PC-9 (cell line): ENCODE measurements at regions of chr19 and their contacts with region 1.

Region 1: DNA sequence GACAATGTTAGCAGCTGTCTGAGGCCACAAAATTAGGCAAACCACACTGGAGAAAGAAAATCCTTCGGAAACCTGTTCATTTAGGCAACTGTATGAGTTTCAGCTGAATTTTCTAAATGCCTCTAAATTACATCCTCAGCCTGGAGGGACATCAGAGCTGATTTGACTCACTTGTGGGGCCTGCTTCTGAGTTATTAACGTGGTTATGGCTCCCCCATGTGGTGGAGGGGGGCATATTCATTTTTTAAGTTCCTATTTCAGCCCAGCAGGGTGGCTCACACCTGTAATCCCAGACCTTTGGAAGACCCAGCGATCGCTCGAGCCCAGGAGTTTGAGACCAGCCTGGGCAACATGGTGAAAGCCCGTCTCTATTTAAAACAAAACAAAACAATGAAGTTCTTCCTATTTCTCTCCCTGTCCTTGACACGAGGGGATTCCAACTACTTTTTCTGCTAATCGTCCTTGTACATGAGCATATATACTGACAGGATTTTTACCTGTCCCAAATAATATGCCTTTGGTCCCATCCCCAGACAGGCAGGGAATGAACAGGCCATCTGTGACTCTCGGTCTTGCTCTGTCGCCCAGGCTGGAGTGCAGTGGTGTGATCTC is 31.5 kb upstream of the HIF3A start:
- DNase-seq: peak; percentile 77 to 82
- H3K4me3 ChIP-seq: no peak overlapping the region
- H3K27ac ChIP-seq: no peak overlapping the region
- H3K4me1 ChIP-seq: peaks cover 40% of the 10 kb centered on the region
- H3K27me3 ChIP-seq: no peaks in the 10 kb centered on the region
- CTCF ChIP-seq: peak; percentile 96

Region 2: DNA sequence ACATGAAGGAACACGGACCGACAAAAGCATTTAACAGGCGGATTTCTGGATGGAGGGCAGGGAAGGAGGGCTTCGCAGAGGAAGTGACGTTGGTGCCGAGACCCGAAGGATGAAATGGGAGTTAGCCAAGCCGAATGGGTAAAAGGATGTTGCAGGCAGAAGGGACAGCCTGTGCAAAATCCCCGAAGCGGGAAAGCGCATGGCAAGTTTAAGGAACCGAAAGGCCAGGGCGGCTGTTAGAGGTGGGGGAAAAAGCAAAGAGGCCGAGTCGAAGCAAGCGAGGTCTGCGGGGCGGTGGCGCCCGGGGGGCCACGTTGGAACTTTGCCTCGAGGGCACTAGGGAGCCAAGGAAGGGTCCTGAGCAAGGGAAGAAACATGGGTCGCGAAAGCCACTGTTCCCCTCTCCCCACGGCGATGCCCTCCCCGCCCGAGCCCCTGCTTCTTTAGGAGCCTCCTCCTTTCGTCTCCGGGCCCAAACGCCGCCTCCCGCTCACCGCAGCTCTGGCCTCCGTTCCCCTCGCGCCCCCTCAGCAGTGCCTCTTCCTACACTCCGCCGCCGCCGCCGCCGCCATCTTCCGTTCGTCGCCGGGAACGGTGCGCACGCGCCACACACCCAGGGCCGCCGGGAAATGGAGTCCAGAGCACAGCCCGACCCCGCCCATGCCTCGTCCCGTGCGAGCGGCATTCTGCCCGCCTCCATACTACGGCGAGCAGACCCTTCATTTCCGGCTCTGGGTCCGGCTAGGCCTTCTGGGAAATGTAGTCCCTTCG is 402.6 kb before region 1 on chr19 and contains the start of gene SYMPK:
- CTCF ChIA-PET with region 1: no interaction called
- POLR2A ChIA-PET with region 1: interaction called, 3 read pairs
- intact Hi-C with region 1: loop called (anchors 10 kb)
- DNase-seq: peak; percentile 97
- H3K4me3 ChIP-seq: peak within 1 kb of the TSS; percentile 67
- H3K27ac ChIP-seq: peak within 1 kb of the TSS; percentile 30
- H3K4me1 ChIP-seq: peaks cover 15% of the 10 kb centered on the region
- H3K27me3 ChIP-seq: peaks cover 41% of the 10 kb centered on the region
- CTCF ChIP-seq: no peak; the same call in 1 of the 2 replicates
- total RNA-seq, gene SYMPK: 85.5 and 121 TPM in 2 replicates

Region 3: GRCh38 chr19:46076951-46077816 is 188.1 kb before region 1 on chr19:
- CTCF ChIA-PET with region 1: interaction called, 28 read pairs
- POLR2A ChIA-PET with region 1: no interaction called
- intact Hi-C with region 1: loop called (anchors 1 kb)
- DNase-seq: peak; percentile 73 to 74
- H3K4me3 ChIP-seq: peak overlapping the region; percentile 55
- H3K27ac ChIP-seq: no peak overlapping the region
- H3K4me1 ChIP-seq: peaks cover 38% of the 10 kb centered on the region
- H3K27me3 ChIP-seq: no peaks in the 10 kb centered on the region
- CTCF ChIP-seq: peak; percentile 99

Region 4: DNA sequence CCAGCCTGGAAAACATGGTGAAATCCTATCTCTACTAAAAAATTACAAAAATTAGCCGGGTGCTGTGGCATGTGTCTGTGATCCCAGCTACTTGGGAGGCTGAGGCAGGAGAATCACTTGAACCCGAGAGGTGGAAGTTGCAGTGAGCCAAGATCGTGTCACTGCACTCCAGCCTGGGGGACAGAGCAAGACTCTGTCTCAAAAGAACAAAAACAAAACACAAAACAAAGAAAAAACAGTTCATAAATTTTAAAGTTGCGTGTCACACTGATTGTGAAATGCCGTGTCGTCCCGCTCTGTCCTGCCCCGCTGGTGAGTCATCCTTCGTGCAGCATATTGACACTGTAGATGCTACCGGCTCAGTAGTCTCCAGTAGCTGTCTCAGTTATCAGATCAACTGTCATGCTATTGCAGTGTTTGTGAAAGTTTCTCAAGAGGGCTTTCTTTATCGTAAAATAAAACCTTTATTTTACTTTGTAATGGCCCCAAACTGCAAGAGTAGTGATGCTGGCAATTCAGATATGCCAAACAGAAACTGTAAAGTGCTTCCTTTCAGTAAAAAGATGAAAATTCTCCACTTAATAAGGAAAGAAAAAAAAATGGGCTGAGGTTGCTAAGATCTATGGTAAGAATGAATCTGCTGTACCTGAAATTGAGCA is 72.2 kb before region 1 on chr19:
- CTCF ChIA-PET with region 1: interaction called, 5 read pairs
- POLR2A ChIA-PET with region 1: no interaction called
- intact Hi-C with region 1: loop called (anchors 1 kb)
- DNase-seq: peak; percentile 74 to 94
- H3K4me3 ChIP-seq: no peak overlapping the region; the same call in 1 of the 2 replicates
- H3K27ac ChIP-seq: peak overlapping the region; percentile 82
- H3K4me1 ChIP-seq: peaks cover 63% of the 10 kb centered on the region
- H3K27me3 ChIP-seq: no peaks in the 10 kb centered on the region
- CTCF ChIP-seq: no peak

Region 5: DNA sequence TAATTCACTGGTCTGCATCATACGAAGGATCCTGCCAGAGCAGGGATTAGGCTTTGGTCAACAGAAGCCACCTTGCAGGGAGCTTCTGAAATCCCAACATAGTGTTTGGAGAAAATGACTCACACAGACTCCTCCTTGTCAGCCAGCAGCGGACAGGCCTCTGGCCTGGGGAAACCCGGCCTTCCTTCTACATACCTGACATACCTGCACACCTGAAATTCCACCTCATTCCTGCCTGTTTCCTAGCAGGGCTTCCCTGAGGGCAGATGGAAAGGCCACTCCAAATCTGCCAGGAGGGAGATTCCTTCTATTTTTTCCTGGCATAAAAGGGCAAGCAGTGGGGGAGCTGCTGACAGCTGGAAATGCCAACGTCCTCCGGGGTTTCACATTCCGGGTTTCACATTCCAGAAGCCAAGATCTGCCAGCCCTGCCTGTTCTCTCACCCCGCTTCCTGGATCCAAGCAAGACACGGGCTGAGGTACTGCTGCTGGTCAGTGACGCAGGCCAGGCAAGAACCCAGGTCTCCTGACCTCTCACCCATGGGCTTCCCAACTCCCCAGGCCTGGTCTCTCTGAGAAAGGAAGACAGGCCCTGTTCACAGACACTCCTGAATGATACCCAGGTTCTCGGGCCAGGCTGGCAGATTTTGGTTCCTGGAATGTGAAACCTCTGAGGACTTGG is 54.0 kb before region 1 on chr19:
- CTCF ChIA-PET with region 1: no interaction called
- POLR2A ChIA-PET with region 1: interaction called, 10 read pairs
- intact Hi-C with region 1: loop called (anchors 1 kb)
- DNase-seq: peak; percentile 92 to 99
- H3K4me3 ChIP-seq: peak overlapping the region; percentile 2; the same call in 1 of the 2 replicates
- H3K27ac ChIP-seq: peak overlapping the region; percentile 93
- H3K4me1 ChIP-seq: peaks cover 70% of the 10 kb centered on the region
- H3K27me3 ChIP-seq: no peaks in the 10 kb centered on the region
- CTCF ChIP-seq: no peak

Region 6: GRCh38 chr19:46232029-46232428 is 33.3 kb before region 1 on chr19:
- CTCF ChIA-PET with region 1: interaction called, 4 read pairs
- POLR2A ChIA-PET with region 1: interaction called, 4 read pairs
- intact Hi-C with region 1: loop called (anchors 2 kb)
- DNase-seq: peak; percentile 96 to 99
- H3K4me3 ChIP-seq: no peak overlapping the region; the same call in 1 of the 2 replicates
- H3K27ac ChIP-seq: peak overlapping the region; percentile 87
- H3K4me1 ChIP-seq: peaks cover 55% of the 10 kb centered on the region
- H3K27me3 ChIP-seq: no peaks in the 10 kb centered on the region
- CTCF ChIP-seq: no peak

Region 7: DNA sequence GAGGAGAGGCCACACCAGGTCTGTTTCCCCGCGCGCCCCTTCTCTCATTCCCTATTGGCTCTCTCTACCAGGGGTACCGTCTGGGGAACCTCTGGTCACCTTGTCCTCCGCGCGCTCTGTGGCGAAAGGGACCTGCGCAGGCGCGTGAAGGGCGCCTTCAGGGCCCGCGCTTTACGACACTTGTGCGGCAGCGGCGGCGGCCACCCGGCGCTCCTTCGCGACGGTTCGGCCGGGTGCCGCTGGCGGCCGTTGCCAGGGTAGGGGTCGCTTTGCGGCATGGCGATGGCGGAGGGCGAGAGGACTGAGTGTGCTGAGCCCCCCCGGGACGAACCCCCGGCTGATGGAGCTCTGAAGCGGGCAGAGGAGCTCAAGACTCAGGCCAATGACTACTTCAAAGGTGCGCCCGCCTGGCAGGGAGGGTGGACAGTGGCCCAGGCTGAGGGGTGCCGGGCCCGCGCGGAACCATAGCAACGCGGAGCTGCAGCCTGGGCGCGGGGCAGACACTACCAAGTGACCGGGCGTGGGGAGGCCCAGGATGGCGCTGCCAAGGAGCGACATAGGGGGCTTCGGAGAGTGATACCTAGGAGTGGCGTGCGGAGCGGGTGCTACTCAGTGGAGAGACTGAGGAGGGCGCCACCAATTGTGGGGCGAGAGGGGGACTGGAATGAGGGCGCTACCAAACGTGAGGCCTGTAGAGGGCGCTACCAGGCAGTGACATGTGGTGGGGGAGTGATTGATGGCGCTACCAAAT is 81.7 kb after region 1 on chr19 and contains the start of gene PPP5C:
- CTCF ChIA-PET with region 1: no interaction called
- POLR2A ChIA-PET with region 1: no interaction called
- intact Hi-C with region 1: no loop called
- DNase-seq: peak; percentile 86 to 93
- H3K4me3 ChIP-seq: peak within 1 kb of the TSS; percentile 97
- H3K27ac ChIP-seq: peak within 1 kb of the TSS; percentile 20; the same call in 1 of the 2 replicates
- H3K4me1 ChIP-seq: peaks cover 12% of the 10 kb centered on the region
- H3K27me3 ChIP-seq: peaks cover 13% of the 10 kb centered on the region
- CTCF ChIP-seq: peak; percentile 97
- total RNA-seq, gene PPP5C: 74.7 and 85.4 TPM in 2 replicates